Mammary epithelial cell (primary cell): ENCODE measurements at regions of chr5 and their contacts with region 1.

Region 1: GRCh38 chr5:119322948-119323537 is 32.8 kb upstream of the TNFAIP8 start:
- DNase-seq: peak; percentile 19
- H3K4me3 ChIP-seq: no peak overlapping the region
- H3K27ac ChIP-seq: peak overlapping the region; percentile 93
- H3K4me1 ChIP-seq: peaks cover 38% of the 10 kb centered on the region
- H3K27me3 ChIP-seq: no peaks in the 10 kb centered on the region
- CTCF ChIP-seq: no peak

Region 2: GRCh38 chr5:119220576-119221197 is 102.4 kb before region 1 on chr5:
- CTCF ChIA-PET with region 1: no interaction called
- dilution Hi-C with region 1: no loop called
- in situ Hi-C with region 1: no loop called
- intact Hi-C with region 1: no loop called
- DNase-seq: no peak
- H3K4me3 ChIP-seq: no peak overlapping the region
- H3K27ac ChIP-seq: no peak overlapping the region
- H3K4me1 ChIP-seq: no peaks in the 10 kb centered on the region
- H3K27me3 ChIP-seq: no peaks in the 10 kb centered on the region
- CTCF ChIP-seq: no peak

Region 3: DNA sequence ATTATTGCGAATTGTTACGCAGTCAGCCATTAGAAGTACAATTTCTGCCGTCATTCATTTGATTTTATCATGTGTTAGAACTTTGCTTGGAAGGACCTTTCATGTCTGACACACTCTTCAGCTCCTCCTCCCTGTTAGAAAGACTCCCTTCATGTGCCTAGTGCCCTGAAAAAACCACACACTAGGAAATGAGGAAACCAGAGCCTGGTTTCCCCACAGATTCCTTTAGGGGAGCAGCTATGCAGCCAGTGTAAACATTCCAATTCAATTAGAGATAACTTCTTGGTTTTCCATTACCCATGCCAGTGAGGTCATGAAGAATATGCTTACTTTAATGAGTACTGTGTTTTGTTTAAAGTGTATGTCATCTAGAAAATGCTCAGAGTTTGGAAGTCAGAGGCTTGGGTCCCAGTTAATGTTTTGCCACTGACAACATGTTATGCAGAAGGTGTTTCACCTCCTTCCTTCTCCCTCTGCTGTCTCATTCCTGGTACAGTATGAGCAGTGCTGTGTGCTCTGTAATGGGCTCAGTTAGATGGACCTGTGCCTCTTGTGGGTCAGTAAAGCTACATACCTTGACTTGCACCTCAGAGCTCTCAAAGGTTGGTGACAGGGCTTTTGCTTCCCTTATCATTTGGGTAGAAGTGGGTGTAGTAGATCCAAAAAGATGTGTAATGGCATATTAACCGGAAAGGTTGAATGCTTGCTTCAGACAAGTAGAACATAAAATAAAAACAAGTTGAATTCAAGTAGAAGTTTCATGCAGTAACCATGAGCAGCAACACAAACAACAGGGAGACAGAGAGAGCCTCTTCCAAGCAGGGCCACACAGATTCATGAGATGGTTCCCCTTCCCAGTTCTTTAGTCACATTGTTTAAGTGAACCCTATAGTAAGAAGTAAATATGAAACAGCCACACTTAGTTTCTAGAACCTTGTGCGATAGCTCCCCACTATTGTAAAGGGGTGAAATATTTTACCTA is 19.8 kb before region 1 on chr5:
- CTCF ChIA-PET with region 1: no interaction called
- dilution Hi-C with region 1: no loop called
- in situ Hi-C with region 1: no loop called
- intact Hi-C with region 1: loop called (anchors 2 kb)
- DNase-seq: peak; percentile 97
- H3K4me3 ChIP-seq: no peak overlapping the region
- H3K27ac ChIP-seq: peak overlapping the region; percentile 82
- H3K4me1 ChIP-seq: peaks cover 40% of the 10 kb centered on the region
- H3K27me3 ChIP-seq: no peaks in the 10 kb centered on the region
- CTCF ChIP-seq: no peak

Region 4: GRCh38 chr5:119360905-119361593 is 38.0 kb after region 1 on chr5:
- CTCF ChIA-PET with region 1: no interaction called
- dilution Hi-C with region 1: no loop called
- in situ Hi-C with region 1: no loop called
- intact Hi-C with region 1: loop called (anchors 2 kb)
- DNase-seq: peak; percentile 91
- H3K4me3 ChIP-seq: peak overlapping the region in 1 of 3 experiments; percentile 2
- H3K27ac ChIP-seq: peak overlapping the region; percentile 81
- H3K4me1 ChIP-seq: peaks cover 74% of the 10 kb centered on the region
- H3K27me3 ChIP-seq: no peaks in the 10 kb centered on the region
- CTCF ChIP-seq: no peak